ENCODE measurements at regions of chr3 and their contacts with region 1.

Region 1: GRCh38 chr3:180912304-180913296 is at the start of gene FXR1:
- DNase-seq: peak; percentile 76 to 94 (median 90)
- ATAC-seq: peak; percentile 84
- H3K4me3 ChIP-seq: peak within 1 kb of the TSS; percentile 96 to 98
- H3K4me3 Mint-ChIP-seq: peak within 1 kb of the TSS; percentile 97
- H3K27ac ChIP-seq: peak within 1 kb of the TSS; percentile 93 to 95
- H3K27ac Mint-ChIP-seq: peak within 1 kb of the TSS; percentile 96
- H3K4me1 ChIP-seq: peaks cover 47% of the 10 kb centered on the region
- H3K4me1 Mint-ChIP-seq: peaks cover 72% of the 10 kb centered on the region
- H3K27me3 ChIP-seq: no peaks in the 10 kb centered on the region
- H3K27me3 Mint-ChIP-seq: no peaks in the 10 kb centered on the region
- CTCF ChIP-seq: no peak
- total RNA-seq, gene FXR1: 192 to 206 TPM

Region 2: GRCh38 chr3:179347345-179348194 is 1565.0 kb before region 1 on chr3 and contains the start of gene MFN1:
- CTCF ChIA-PET with region 1: no interaction called
- POLR2A ChIA-PET with region 1: no interaction called
- intact Hi-C with region 1: loop called in 1 of 2 experiments (anchors 5 kb)
- DNase-seq: peak; percentile 72 to 95 (median 88)
- ATAC-seq: peak; percentile 97
- H3K4me3 ChIP-seq: peak within 1 kb of the TSS; percentile 89 to 94
- H3K4me3 Mint-ChIP-seq: peak within 1 kb of the TSS; percentile 100
- H3K27ac ChIP-seq: peak within 1 kb of the TSS; percentile 68 to 77
- H3K27ac Mint-ChIP-seq: peak within 1 kb of the TSS; percentile 99
- H3K4me1 ChIP-seq: peaks cover 6% of the 10 kb centered on the region
- H3K4me1 Mint-ChIP-seq: peaks cover 35% of the 10 kb centered on the region
- H3K27me3 ChIP-seq: no peaks in the 10 kb centered on the region
- H3K27me3 Mint-ChIP-seq: no peaks in the 10 kb centered on the region
- CTCF ChIP-seq: no peak
- total RNA-seq, gene MFN1: 21.9 to 26.7 TPM

Region 3: GRCh38 chr3:179653096-179653797 is 1259.4 kb before region 1 on chr3:
- CTCF ChIA-PET with region 1: no interaction called
- POLR2A ChIA-PET with region 1: no interaction called
- intact Hi-C with region 1: loop called in 1 of 2 experiments (anchors 5 kb)
- DNase-seq: peak; percentile 15 to 79 (median 64)
- ATAC-seq: peak; percentile 62
- H3K4me3 ChIP-seq: peak overlapping the region; percentile 78 to 93
- H3K4me3 Mint-ChIP-seq: peak overlapping the region; percentile 92
- H3K27ac ChIP-seq: peak overlapping the region; percentile 67 to 69
- H3K27ac Mint-ChIP-seq: peak overlapping the region; percentile 90
- H3K4me1 ChIP-seq: peaks cover 6% of the 10 kb centered on the region
- H3K4me1 Mint-ChIP-seq: peaks cover 31% of the 10 kb centered on the region
- H3K27me3 ChIP-seq: no peaks in the 10 kb centered on the region
- H3K27me3 Mint-ChIP-seq: no peaks in the 10 kb centered on the region
- CTCF ChIP-seq: no peak

Region 4: DNA sequence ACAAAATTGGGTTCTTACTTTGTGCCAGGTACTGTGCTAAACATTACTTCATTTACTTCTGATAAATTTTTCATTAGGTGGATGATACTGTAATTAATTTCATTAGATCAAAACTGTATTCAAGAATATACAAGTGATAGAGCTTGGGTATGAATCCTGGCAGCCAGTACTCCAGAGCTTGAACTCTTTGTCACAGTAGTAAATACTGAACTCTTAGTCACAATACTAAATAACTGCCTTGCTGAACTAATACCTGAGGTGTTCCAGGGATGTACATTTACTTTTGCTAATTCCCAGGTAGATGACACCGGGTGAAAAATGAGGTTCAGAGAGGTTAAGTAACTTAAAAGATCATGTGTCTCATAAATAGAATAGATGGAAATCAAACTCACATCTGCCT is 20.2 kb after region 1 on chr3:
- CTCF ChIA-PET with region 1: interaction called, 4 read pairs
- POLR2A ChIA-PET with region 1: interaction called, 13 read pairs
- intact Hi-C with region 1: no loop called
- DNase-seq: no peak
- ATAC-seq: no peak
- H3K4me3 ChIP-seq: no peak overlapping the region
- H3K4me3 Mint-ChIP-seq: no peak overlapping the region
- H3K27ac ChIP-seq: no peak overlapping the region
- H3K27ac Mint-ChIP-seq: no peak overlapping the region
- H3K4me1 ChIP-seq: peaks cover 6% of the 10 kb centered on the region
- H3K4me1 Mint-ChIP-seq: peaks cover 54% of the 10 kb centered on the region
- H3K27me3 ChIP-seq: no peaks in the 10 kb centered on the region
- H3K27me3 Mint-ChIP-seq: no peaks in the 10 kb centered on the region
- CTCF ChIP-seq: no peak

Region 5: GRCh38 chr3:182792901-182793662 is 1880.5 kb after region 1 on chr3 and contains the start of gene ATP11B:
- CTCF ChIA-PET with region 1: no interaction called
- POLR2A ChIA-PET with region 1: interaction called, 4 read pairs
- intact Hi-C with region 1: loop called in 1 of 2 experiments (anchors 5 kb)
- DNase-seq: peak; percentile 69 to 91 (median 81)
- ATAC-seq: peak; percentile 73
- H3K4me3 ChIP-seq: peak within 1 kb of the TSS; percentile 86 to 96
- H3K4me3 Mint-ChIP-seq: peak within 1 kb of the TSS; percentile 99
- H3K27ac ChIP-seq: peak within 1 kb of the TSS; percentile 90 to 98
- H3K27ac Mint-ChIP-seq: peak within 1 kb of the TSS; percentile 100
- H3K4me1 ChIP-seq: peaks cover 22% of the 10 kb centered on the region
- H3K4me1 Mint-ChIP-seq: peaks cover 32% of the 10 kb centered on the region
- H3K27me3 ChIP-seq: no peaks in the 10 kb centered on the region
- H3K27me3 Mint-ChIP-seq: peaks cover 2% of the 10 kb centered on the region
- CTCF ChIP-seq: no peak
- total RNA-seq, gene ATP11B: 122 to 125 TPM